Activated B cell treated with CpG ODN at 0.5 μM for 24 hours (primary cell): ENCODE measurements at regions of chr19 and their contacts with region 1.

Region 1: DNA sequence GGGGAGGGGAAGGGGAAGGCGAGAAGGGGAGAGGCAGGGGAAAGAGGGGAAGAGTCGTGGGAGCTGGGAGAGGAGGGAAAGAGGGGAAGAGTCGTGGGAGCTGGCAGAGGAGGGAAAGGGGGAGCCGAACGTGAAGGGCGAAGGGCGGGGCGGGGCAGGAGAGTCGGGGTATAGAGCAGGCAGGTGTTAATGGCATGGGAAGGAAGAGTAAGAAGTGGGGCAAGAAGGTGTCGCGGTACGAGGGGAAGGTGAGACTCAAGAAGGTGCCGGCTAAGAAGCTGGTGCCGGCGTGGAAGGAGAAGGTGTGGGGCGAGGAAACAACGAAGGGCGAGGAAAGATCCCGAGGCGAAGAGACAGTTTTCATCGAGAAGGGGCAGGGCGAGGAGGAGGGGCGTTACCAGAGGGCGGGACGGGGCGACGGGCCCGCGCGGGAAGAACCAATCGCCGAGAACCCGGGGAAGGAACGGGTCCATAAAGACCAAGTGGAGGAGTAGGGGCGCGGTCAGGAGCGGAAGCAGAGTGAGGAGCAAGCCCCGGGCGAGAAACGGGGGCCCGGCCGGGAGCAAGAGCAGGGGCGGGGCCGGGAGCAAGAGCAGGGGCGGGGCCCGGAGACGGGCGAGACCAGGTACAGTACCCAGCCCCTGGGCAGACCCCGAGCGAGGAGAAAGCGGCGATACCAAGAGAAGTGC is 463 bp downstream of the CATSPERG start:
- DNase-seq: peak; percentile 91
- ATAC-seq: peak; percentile 64
- H3K4me3 Mint-ChIP-seq: peak overlapping the region; percentile 91
- H3K27ac Mint-ChIP-seq: peak overlapping the region; percentile 97
- H3K4me1 Mint-ChIP-seq: peaks cover 8% of the 10 kb centered on the region
- H3K27me3 Mint-ChIP-seq: no peaks in the 10 kb centered on the region
- CTCF ChIP-seq: no peak

Region 2: DNA sequence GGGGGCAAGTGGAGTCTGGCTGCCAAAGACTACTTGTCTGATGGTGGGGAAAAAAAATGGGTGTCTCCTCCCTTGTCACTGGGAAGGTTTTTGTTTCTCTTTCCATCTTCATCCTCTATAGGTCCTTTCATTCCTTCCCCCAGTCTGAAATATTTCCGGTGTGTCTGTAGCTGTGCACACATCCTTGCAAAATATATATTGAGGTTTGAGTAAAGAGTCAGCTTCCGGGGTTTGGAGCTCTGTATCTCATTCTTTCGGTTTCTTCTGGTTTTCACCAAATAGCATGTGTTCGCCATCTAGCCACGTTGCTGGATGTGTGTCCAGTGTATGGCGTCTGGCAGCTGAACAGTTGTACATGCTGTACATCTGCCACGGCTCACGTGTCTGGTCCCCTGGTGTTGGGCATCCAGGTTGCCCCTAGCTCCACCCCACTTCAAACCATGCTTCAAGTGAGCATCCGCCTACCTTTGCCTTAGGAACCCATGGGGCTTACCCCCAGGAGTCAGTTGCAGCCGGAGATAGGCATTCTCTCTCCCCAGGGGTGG is 286.9 kb before region 1 on chr19:
- CTCF ChIA-PET with region 1: no interaction called
- POLR2A ChIA-PET with region 1: no interaction called
- intact Hi-C with region 1: loop called (anchors 5 kb)
- DNase-seq: peak; percentile 55
- ATAC-seq: peak; percentile 37
- H3K4me3 Mint-ChIP-seq: peak overlapping the region; percentile 79
- H3K27ac Mint-ChIP-seq: peak overlapping the region; percentile 99
- H3K4me1 Mint-ChIP-seq: peaks cover 75% of the 10 kb centered on the region
- H3K27me3 Mint-ChIP-seq: no peaks in the 10 kb centered on the region
- CTCF ChIP-seq: no peak

Region 3: DNA sequence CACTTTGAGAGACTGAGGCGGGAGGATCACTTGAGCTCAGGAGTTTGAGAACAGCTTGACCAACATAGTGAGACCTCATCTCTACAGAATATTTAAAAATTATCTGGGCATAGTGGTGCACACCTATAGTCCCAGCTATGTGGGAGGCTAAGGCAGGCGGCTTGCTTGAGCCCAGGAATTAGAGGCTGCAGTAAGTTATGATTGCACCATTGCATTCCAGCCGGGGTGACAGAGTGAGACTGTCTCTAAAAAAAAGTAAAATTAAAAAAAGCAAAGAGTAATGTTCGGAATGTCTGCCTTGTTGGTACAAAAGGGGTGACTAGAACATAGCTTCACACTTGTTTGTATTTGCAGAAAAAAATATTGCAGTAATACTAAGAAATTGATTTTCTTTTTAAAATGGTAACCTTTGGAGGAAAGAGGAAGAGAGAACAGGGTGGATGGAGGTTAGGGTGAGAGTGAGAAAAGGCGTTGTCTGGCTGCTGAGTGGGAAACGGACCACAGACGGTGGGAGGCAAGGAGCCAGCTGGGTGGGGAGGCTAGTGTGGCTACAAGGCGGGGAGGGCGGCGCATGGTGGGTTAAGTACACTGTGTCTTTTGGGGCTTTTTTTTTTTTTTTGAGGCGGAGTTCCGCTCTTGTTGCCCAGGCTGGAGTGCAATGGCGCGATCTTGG is 90.1 kb before region 1 on chr19:
- CTCF ChIA-PET with region 1: interaction called, 13 read pairs
- POLR2A ChIA-PET with region 1: interaction called, 10 read pairs
- intact Hi-C with region 1: loop called (anchors 1 kb)
- DNase-seq: no peak
- ATAC-seq: no peak
- H3K4me3 Mint-ChIP-seq: no peak overlapping the region
- H3K27ac Mint-ChIP-seq: peak overlapping the region; percentile 56
- H3K4me1 Mint-ChIP-seq: peaks cover 29% of the 10 kb centered on the region
- H3K27me3 Mint-ChIP-seq: no peaks in the 10 kb centered on the region
- CTCF ChIP-seq: no peak

Region 4: DNA sequence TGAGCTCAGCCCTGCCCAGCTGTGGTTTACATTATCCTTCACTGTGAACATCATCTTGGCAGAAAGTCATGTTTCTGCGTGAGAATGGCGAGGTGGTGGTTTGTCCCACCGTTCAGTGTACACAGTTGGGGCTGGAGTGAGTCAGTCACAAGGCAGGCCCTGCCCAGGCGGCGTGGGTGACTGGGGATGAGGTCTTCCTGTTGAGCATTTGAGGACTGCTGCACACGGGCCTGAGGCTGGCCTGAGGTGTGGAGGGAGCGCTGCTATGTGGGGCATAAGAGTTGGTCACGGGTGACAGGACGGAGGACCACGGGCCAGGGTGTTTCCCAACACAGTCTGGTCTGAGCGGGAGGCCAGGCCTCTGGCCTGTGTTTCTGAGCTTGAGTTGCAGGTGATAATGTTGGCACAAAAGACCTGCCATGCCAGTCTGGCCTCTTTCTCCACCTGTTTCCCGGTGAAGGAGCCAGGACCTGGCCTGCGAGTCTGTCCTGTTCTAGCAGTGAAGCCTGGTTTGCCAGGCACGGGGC is 45.4 kb before region 1 on chr19:
- CTCF ChIA-PET with region 1: no interaction called
- POLR2A ChIA-PET with region 1: no interaction called
- intact Hi-C with region 1: no loop called
- DNase-seq: no peak
- ATAC-seq: no peak
- H3K4me3 Mint-ChIP-seq: no peak overlapping the region
- H3K27ac Mint-ChIP-seq: no peak overlapping the region
- H3K4me1 Mint-ChIP-seq: peaks cover 2% of the 10 kb centered on the region
- H3K27me3 Mint-ChIP-seq: no peaks in the 10 kb centered on the region
- CTCF ChIP-seq: no peak

Region 5: GRCh38 chr19:38315657-38316476 is 20.2 kb before region 1 on chr19 and contains the start of gene YIF1B:
- CTCF ChIA-PET with region 1: interaction called, 5 read pairs
- POLR2A ChIA-PET with region 1: no interaction called
- intact Hi-C with region 1: loop called (anchors 1 kb)
- DNase-seq: peak; percentile 89
- ATAC-seq: peak; percentile 92
- H3K4me3 Mint-ChIP-seq: peak within 1 kb of the TSS; percentile 85
- H3K27ac Mint-ChIP-seq: peak within 1 kb of the TSS; percentile 94
- H3K4me1 Mint-ChIP-seq: peaks cover 49% of the 10 kb centered on the region
- H3K27me3 Mint-ChIP-seq: no peaks in the 10 kb centered on the region
- CTCF ChIP-seq: no peak
- total RNA-seq, gene YIF1B: 28.7 and 30.1 TPM in 2 replicates

Region 6: GRCh38 chr19:38374429-38375176 is 38.5 kb after region 1 on chr19 and contains the start of gene PSMD8:
- CTCF ChIA-PET with region 1: interaction called, 16 read pairs
- POLR2A ChIA-PET with region 1: interaction called, 82 read pairs
- intact Hi-C with region 1: loop called (anchors 1 kb)
- DNase-seq: peak; percentile 96
- ATAC-seq: peak; percentile 96
- H3K4me3 Mint-ChIP-seq: peak within 1 kb of the TSS; percentile 100
- H3K27ac Mint-ChIP-seq: peak within 1 kb of the TSS; percentile 96
- H3K4me1 Mint-ChIP-seq: peaks cover 25% of the 10 kb centered on the region
- H3K27me3 Mint-ChIP-seq: no peaks in the 10 kb centered on the region
- CTCF ChIP-seq: no peak
- total RNA-seq, gene PSMD8: 134 and 138 TPM in 2 replicates

Region 7: GRCh38 chr19:38394488-38394887 is 58.4 kb after region 1 on chr19:
- CTCF ChIA-PET with region 1: no interaction called
- POLR2A ChIA-PET with region 1: no interaction called
- intact Hi-C with region 1: no loop called
- DNase-seq: peak; percentile 46
- ATAC-seq: peak; percentile 76
- H3K4me3 Mint-ChIP-seq: peak overlapping the region; percentile 73
- H3K27ac Mint-ChIP-seq: no peak overlapping the region
- H3K4me1 Mint-ChIP-seq: peaks cover 16% of the 10 kb centered on the region
- H3K27me3 Mint-ChIP-seq: peaks cover 36% of the 10 kb centered on the region
- CTCF ChIP-seq: no peak

Region 8: GRCh38 chr19:38618590-38619360 is 282.7 kb after region 1 on chr19 and contains the start of gene EIF3K:
- CTCF ChIA-PET with region 1: interaction called, 3 read pairs
- POLR2A ChIA-PET with region 1: no interaction called
- intact Hi-C with region 1: loop called (anchors 1 kb)
- DNase-seq: peak; percentile 97
- ATAC-seq: peak; percentile 28
- H3K4me3 Mint-ChIP-seq: peak within 1 kb of the TSS; percentile 100
- H3K27ac Mint-ChIP-seq: peak within 1 kb of the TSS; percentile 97
- H3K4me1 Mint-ChIP-seq: peaks cover 53% of the 10 kb centered on the region
- H3K27me3 Mint-ChIP-seq: no peaks in the 10 kb centered on the region
- CTCF ChIP-seq: no peak
- total RNA-seq, gene EIF3K: 344 and 385 TPM in 2 replicates

Region 9: GRCh38 chr19:39403331-39404312 is 1067.5 kb after region 1 on chr19:
- CTCF ChIA-PET with region 1: no interaction called
- POLR2A ChIA-PET with region 1: interaction called, 12 read pairs
- intact Hi-C with region 1: no loop called
- DNase-seq: peak; percentile 93
- ATAC-seq: peak; percentile 38
- H3K4me3 Mint-ChIP-seq: peak overlapping the region; percentile 89
- H3K27ac Mint-ChIP-seq: peak overlapping the region; percentile 91
- H3K4me1 Mint-ChIP-seq: peaks cover 74% of the 10 kb centered on the region
- H3K27me3 Mint-ChIP-seq: no peaks in the 10 kb centered on the region
- CTCF ChIP-seq: no peak